Motor neuron (in vitro differentiated cells): ENCODE measurements at regions of chr15 and their contacts with region 1.

Region 1: DNA sequence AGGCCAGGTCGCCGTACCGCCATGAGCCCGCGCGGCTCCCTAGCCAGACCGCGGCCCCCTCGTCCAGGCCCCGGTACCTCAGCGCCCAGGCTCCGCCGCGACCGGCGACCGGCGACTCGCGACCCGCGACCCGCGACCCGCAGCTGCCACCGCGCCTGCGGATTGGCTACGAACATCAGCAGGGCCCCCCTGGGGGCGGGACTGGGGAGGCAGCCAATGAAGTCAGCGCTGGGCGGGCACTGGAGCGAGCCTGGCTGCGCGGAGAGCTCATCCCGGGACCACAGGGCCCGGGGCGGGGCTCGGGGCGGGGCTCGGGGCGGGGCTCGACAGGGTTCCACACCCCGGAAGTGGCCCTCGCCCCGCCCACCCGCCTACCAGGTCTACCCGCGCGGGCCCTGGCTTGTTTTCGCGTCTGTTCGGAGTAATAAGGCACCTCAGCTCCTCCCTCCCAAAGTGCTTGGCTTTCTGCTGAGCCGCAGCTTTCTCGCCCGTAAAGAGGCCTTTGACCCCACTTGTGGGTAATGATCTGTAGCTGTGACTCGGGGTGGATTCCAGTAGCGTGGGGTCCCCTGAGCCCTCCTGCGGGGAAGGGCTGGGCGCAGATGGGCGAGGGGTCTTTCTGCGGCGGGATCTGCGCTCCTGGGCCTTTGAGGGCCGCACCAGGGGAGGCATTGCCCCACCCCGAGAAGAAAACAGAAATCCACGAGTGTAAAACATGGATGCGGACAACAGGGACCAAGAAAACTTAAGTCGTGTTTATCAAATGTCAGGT is at the start of gene LYSMD4:
- ATAC-seq: peak; percentile 95 to 98 (median 98)
- H3K4me3 ChIP-seq: peak within 1 kb of the TSS; percentile 51 to 98 (median 70)
- H3K27ac ChIP-seq: peak within 1 kb of the TSS; percentile 34 to 66
- H3K4me1 ChIP-seq: peaks cover 11% of the 10 kb centered on the region in 2 donors
- total RNA-seq, gene LYSMD4: 2.7 to 22.9 (median 12.6) TPM

Region 2: GRCh38 chr15:99250494-99251435 is 482.7 kb before region 1 on chr15:
- in situ Hi-C with region 1: loop called in 1 of 9 experiments (anchors 25 kb)
- ATAC-seq: peak; percentile 92 to 99 (median 98)
- H3K4me3 ChIP-seq: peak overlapping the region; percentile 66 to 95 (median 88)
- H3K27ac ChIP-seq: peak overlapping the region; percentile 90 to 96
- H3K4me1 ChIP-seq: peaks cover 5 to 8% of the 10 kb centered on the region in 2 donors

Region 3: GRCh38 chr15:99275525-99276128 is 457.8 kb before region 1 on chr15:
- in situ Hi-C with region 1: loop called in 2 of 9 experiments (anchors 25 kb)
- ATAC-seq: no peak
- H3K4me3 ChIP-seq: no peak overlapping the region
- H3K27ac ChIP-seq: no peak overlapping the region
- H3K4me1 ChIP-seq: no peaks in the 10 kb centered on the region